ENCODE measurements at regions of chrX and their contacts with region 1.

Region 1: GRCh38 chrX:18410043-18410442 is 15.4 kb upstream of the CDKL5 start:
- DNase-seq: peak; percentile 48
- H3K4me3 ChIP-seq: no peak overlapping the region
- H3K27ac ChIP-seq: no peak overlapping the region
- H3K4me1 ChIP-seq: no peaks in the 10 kb centered on the region; a peak in 1 of 4 replicates
- H3K27me3 ChIP-seq: no peaks in the 10 kb centered on the region
- CTCF ChIP-seq: peak; percentile 55
- EP300 ChIP-seq: no peak
- RAD21 ChIP-seq: peak; percentile 88

Region 2: GRCh38 chrX:18899796-18900447 is 489.9 kb after region 1 on chrX:
- CTCF ChIA-PET with region 1: interaction called, 18 read pairs
- POLR2A ChIA-PET with region 1: no interaction called
- DNase-seq: peak; percentile 87
- H3K4me3 ChIP-seq: peak overlapping the region in 1 of 2 experiments; percentile 23; a peak in 1 of 4 replicates
- H3K27ac ChIP-seq: peak overlapping the region in 1 of 2 experiments; percentile 53; a peak in 2 of 4 replicates
- H3K4me1 ChIP-seq: peaks cover 0 to 51% of the 10 kb centered on the region in 2 experiments; a peak in 2 of 4 replicates
- H3K27me3 ChIP-seq: peaks cover 6% of the 10 kb centered on the region; the same call in 1 of the 2 replicates
- CTCF ChIP-seq: peak; percentile 55
- EP300 ChIP-seq: no peak
- RAD21 ChIP-seq: peak; percentile 92

Measured in SK-N-SH (cell line).